MCF 10A (cell line): ENCODE measurements at regions of chr19 and their contacts with region 1.

Region 1: GRCh38 chr19:17292286-17293097 is 10.7 kb downstream of the ABHD8 start:
- DNase-seq: peak; percentile 98
- H3K4me3 Mint-ChIP-seq: peak overlapping the region; percentile 80
- H3K27ac Mint-ChIP-seq: peak overlapping the region; percentile 31
- H3K4me1 Mint-ChIP-seq: peaks cover 4% of the 10 kb centered on the region
- H3K27me3 Mint-ChIP-seq: no peaks in the 10 kb centered on the region
- CTCF ChIP-seq: peak; percentile 80

Region 2: DNA sequence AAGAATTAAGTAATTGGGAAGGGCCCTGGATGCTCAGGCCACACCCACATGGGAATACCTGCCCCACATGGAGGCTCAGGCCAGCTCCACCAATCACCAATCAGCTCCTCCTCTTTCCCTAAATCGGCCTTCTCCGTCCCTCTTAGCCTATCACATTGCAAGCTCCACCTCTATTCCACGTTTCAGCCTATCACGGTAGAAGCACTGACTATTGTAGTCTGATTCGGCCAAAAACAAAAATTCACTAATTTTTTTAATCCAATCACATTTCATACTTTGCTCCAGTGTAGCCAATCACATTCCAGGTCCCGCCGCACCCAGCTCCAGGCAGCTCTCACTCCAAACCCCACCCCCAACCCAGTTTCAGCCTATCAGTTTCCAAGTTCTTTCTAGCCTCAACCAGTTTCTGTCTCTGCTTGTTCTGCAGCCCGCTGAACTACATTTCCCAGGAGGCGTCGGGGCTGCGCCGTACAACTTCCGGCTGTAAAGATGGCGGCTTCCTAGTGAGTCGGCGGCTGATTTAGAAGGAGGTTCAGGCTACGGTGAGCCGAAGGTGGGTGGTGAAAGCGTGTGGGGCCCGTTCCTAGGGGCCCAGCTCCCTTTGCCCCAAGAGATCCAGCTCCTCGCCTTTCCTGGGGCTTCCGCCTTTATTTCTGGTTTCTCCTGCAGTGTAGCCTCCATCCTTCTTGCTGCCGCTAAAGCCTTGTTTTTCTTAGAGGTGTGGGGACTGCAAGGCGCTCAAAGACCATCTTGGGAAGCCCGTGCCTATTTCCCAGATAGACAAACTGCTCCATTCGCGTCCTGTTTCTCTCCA is 25.3 kb before region 1 on chr19 and contains the start of gene BABAM1:
- CTCF ChIA-PET with region 1: interaction called, 5 read pairs
- POLR2A ChIA-PET with region 1: interaction called, 21 read pairs
- intact Hi-C with region 1: no loop called
- DNase-seq: peak; percentile 99
- H3K4me3 Mint-ChIP-seq: peak within 1 kb of the TSS; percentile 84
- H3K27ac Mint-ChIP-seq: peak within 1 kb of the TSS; percentile 93
- H3K4me1 Mint-ChIP-seq: peaks cover 6% of the 10 kb centered on the region
- H3K27me3 Mint-ChIP-seq: no peaks in the 10 kb centered on the region
- CTCF ChIP-seq: no peak
- total RNA-seq, gene BABAM1: 96.1 and 104 TPM in 2 replicates

Region 3: GRCh38 chr19:17305517-17306284 is 13.2 kb after region 1 on chr19 and contains the start of gene MRPL34:
- CTCF ChIA-PET with region 1: interaction called, 13 read pairs
- POLR2A ChIA-PET with region 1: interaction called, 17 read pairs
- intact Hi-C with region 1: loop called (anchors 1 kb)
- DNase-seq: peak; percentile 100
- H3K4me3 Mint-ChIP-seq: peak within 1 kb of the TSS; percentile 78
- H3K27ac Mint-ChIP-seq: peak within 1 kb of the TSS; percentile 55
- H3K4me1 Mint-ChIP-seq: peaks cover 32% of the 10 kb centered on the region
- H3K27me3 Mint-ChIP-seq: no peaks in the 10 kb centered on the region
- CTCF ChIP-seq: peak; percentile 62
- total RNA-seq, gene MRPL34: 58.8 and 65.8 TPM in 2 replicates

Region 4: GRCh38 chr19:17336872-17337722 is 44.6 kb after region 1 on chr19 and contains the start of gene GTPBP3:
- CTCF ChIA-PET with region 1: interaction called, 5 read pairs
- POLR2A ChIA-PET with region 1: interaction called, 11 read pairs
- intact Hi-C with region 1: no loop called
- DNase-seq: peak; percentile 99
- H3K4me3 Mint-ChIP-seq: peak within 1 kb of the TSS; percentile 98
- H3K27ac Mint-ChIP-seq: peak within 1 kb of the TSS; percentile 93
- H3K4me1 Mint-ChIP-seq: peaks cover 15% of the 10 kb centered on the region
- H3K27me3 Mint-ChIP-seq: no peaks in the 10 kb centered on the region
- CTCF ChIP-seq: no peak
- total RNA-seq, gene GTPBP3: 24.8 and 27.9 TPM in 2 replicates

Region 5: GRCh38 chr19:17346109-17346671 is 53.7 kb after region 1 on chr19:
- CTCF ChIA-PET with region 1: no interaction called
- POLR2A ChIA-PET with region 1: no interaction called
- intact Hi-C with region 1: loop called (anchors 5 kb)
- DNase-seq: peak; percentile 79
- H3K4me3 Mint-ChIP-seq: no peak overlapping the region
- H3K27ac Mint-ChIP-seq: no peak overlapping the region
- H3K4me1 Mint-ChIP-seq: peaks cover 15% of the 10 kb centered on the region
- H3K27me3 Mint-ChIP-seq: no peaks in the 10 kb centered on the region
- CTCF ChIP-seq: peak; percentile 90

Region 6: DNA sequence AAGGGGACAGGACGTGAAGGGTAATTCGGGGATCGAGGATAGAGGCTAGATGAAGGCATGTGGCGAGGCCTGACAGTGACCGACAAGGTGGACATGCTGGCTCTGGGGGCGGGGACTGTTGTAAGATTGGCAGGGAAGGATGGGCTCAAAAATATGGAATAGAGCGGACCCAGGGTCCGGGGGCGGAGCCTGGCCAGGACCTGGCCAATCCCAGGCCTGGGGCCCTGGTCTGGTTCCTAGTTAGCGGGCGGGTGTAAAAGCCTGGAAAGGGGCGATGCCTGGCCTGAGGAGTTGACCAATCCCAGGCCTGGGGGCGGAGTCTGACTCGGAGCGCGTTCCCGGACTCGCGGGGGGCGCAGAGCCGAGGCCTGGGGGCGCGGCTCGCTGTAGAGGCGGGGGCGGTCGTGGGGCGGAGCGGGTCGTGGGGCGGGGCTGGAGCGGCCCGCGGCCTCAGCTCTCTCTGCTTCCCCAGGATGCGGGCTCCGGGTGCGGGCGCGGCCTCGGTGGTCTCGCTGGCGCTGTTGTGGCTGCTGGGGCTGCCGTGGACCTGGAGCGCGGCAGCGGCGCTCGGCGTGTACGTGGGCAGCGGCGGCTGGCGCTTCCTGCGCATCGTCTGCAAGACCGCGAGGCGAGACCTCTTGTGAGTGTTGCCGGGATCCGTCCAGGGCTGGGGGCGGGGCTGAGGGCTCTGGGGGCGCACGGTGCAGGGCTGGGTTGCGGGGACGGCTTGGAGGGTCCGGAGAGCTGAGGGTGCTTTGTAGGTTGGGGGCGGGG is 177.8 kb after region 1 on chr19 and contains the start of gene SLC27A1:
- CTCF ChIA-PET with region 1: interaction called, 4 read pairs
- POLR2A ChIA-PET with region 1: interaction called, 5 read pairs
- intact Hi-C with region 1: loop called (anchors 1 kb)
- DNase-seq: peak; percentile 99
- H3K4me3 Mint-ChIP-seq: peak within 1 kb of the TSS; percentile 91
- H3K27ac Mint-ChIP-seq: peak within 1 kb of the TSS; percentile 97
- H3K4me1 Mint-ChIP-seq: peaks cover 41% of the 10 kb centered on the region
- H3K27me3 Mint-ChIP-seq: no peaks in the 10 kb centered on the region
- CTCF ChIP-seq: no peak
- total RNA-seq, gene SLC27A1: 3.4 and 5.0 TPM in 2 replicates